ENCODE measurements at regions of chr6 and their contacts with region 1.

Region 1: GRCh38 chr6:53484476-53485280 is 60.2 kb downstream of the GCLC start:
- DNase-seq: peak in 1 of 2 experiments; percentile 73
- H3K4me3 ChIP-seq: no peak overlapping the region
- H3K27ac ChIP-seq: no peak overlapping the region
- H3K4me1 ChIP-seq: no peaks in the 10 kb centered on the region
- H3K27me3 ChIP-seq: peaks cover 0 to 1% (median 0%) of the 10 kb centered on the region in 4 experiments; a peak in 1 of 7 replicates
- CTCF ChIP-seq: peak; percentile 7 to 85 (median 75)
- EP300 ChIP-seq: no peak
- POLR2A ChIP-seq: no peak
- RAD21 ChIP-seq: peak; percentile 93

Region 2: GRCh38 chr6:53103992-53104675 is 380.5 kb before region 1 on chr6:
- CTCF ChIA-PET with region 1: interaction called, 15 read pairs
- POLR2A ChIA-PET with region 1: no interaction called
- DNase-seq: no peak
- H3K4me3 ChIP-seq: no peak overlapping the region
- H3K27ac ChIP-seq: no peak overlapping the region
- H3K4me1 ChIP-seq: peaks cover 0 to 2% (median 0%) of the 10 kb centered on the region in 4 experiments; a peak in 1 of 7 replicates
- H3K27me3 ChIP-seq: no peaks in the 10 kb centered on the region
- CTCF ChIP-seq: peak in 2 of 3 experiments; percentile 33 to 37; a peak in 2 of 4 replicates
- EP300 ChIP-seq: no peak
- POLR2A ChIP-seq: no peak
- RAD21 ChIP-seq: peak; percentile 68 to 73

Region 3: GRCh38 chr6:53556986-53557715 is 72.5 kb after region 1 on chr6:
- CTCF ChIA-PET with region 1: no interaction called
- POLR2A ChIA-PET with region 1: no interaction called
- DNase-seq: no peak
- H3K4me3 ChIP-seq: no peak overlapping the region
- H3K27ac ChIP-seq: no peak overlapping the region
- H3K4me1 ChIP-seq: no peaks in the 10 kb centered on the region
- H3K27me3 ChIP-seq: no peaks in the 10 kb centered on the region
- CTCF ChIP-seq: no peak
- EP300 ChIP-seq: no peak
- POLR2A ChIP-seq: no peak
- RAD21 ChIP-seq: no peak

Measured in H1 (cell line).